RWPE1 (cell line): ENCODE measurements at regions of chr20 and their contacts with region 1.

Region 1: DNA sequence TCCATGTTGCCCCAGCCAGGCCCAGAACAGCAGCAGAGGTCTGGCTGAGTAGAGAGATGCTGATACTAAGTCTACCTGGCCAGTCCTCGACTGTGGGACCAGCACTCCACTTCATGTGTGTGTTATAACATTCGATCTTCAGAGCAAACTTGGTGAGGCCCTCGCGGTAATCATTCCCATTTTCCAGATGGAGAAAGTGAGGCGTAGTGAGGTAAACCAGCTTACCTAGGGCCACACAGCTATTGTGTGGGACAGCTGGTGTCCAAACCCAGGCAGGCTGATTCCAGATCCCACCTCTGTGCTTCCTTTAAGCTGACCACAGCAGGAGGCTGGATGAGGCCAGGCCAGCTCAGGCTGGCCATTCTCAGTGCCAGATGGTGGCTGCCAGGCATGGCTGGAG is 47.7 kb upstream of the SLC32A1 start:
- DNase-seq: no peak
- H3K27ac ChIP-seq: no peak overlapping the region
- CTCF ChIP-seq: no peak

Region 2: DNA sequence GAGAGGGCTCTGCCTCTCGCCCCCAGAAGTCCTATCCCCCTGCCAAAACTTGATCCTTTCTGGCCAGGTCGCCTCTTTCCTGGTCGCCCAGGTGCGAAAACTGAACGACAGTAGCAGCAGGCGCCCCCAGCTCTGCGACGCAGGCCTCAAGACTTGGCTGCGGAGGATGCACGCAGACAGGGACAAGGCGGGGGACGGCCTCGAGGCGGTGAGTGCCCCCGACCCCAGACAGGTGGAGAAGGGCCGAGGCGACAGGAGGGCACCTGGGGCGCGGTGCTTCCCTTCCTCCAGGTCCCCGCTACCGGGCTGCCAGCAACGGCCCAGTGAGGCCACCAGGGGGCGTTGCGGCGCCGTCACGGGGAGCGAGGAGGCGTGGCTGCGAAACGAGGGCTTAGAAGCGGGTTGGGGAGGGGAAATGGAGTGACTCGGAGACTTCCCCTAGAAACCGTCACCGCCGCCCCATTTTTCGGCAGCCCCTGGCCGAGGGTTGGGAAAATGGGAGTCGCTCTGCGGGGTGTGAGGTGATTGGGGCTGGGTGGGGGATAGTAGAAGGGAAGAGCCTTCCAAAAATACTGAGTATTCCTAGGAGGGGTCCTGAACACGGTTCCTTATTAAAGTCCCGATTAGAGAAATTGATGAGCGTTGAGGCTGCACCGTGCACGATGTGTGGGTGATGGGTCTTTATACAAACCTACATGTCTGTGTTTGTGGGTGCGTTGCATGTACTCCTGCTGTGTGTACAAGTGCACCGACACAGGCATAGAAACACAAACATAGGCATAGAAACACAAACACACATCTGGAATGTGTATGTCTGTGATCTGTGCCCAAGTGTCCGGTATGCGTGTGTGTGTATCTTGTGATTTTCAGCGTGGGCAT is 30.4 kb before region 1 on chr20:
- CTCF ChIA-PET with region 1: no interaction called
- POLR2A ChIA-PET with region 1: no interaction called
- DNase-seq: peak; percentile 95
- H3K27ac ChIP-seq: no peak overlapping the region
- CTCF ChIP-seq: peak; percentile 100

Region 3: DNA sequence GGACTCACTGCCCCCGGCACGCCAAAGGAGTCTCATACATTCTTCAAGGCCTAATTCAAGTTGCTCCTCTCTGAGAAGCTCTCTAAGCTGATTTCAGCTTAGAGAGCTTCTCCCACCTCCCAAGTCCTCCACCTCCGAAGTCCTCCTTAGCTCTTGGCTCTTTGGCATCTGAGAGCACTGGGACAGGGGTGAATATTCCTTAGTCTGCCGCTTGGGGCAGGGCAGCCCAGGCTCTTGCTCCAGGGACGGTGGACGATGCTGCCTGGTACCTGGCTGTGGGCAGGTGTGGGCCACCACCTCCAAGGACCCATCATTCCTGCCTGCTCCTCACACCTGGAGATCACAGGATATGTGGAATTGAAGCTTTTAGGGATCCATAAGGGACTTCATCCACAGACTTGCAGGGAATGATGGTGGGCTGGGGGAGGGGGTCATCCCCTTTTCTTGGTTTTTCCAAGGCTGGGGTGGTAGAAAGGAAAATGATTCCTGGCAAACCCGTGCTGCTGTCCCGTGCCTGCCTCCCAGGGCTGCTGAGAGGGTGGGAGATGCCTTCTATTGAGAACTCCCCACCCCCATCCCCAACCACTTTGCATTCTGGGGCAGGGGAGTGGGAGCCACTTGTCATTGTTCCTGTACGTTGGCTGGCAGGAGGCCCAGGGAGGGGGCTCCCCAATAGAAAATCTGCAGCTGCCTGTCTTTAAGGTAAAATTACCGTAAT is 17.5 kb before region 1 on chr20:
- CTCF ChIA-PET with region 1: interaction called, 11 read pairs
- POLR2A ChIA-PET with region 1: no interaction called
- DNase-seq: peak; percentile 88
- H3K27ac ChIP-seq: no peak overlapping the region
- CTCF ChIP-seq: peak; percentile 86

Region 4: GRCh38 chr20:38692436-38693411 is 16.1 kb after region 1 on chr20:
- CTCF ChIA-PET with region 1: no interaction called
- POLR2A ChIA-PET with region 1: no interaction called
- DNase-seq: peak; percentile 68
- H3K27ac ChIP-seq: no peak overlapping the region
- CTCF ChIP-seq: no peak